Left cardiac atrium (tissue), 4 donors: ENCODE measurements at regions of chr2 and their contacts with region 1.

Region 1: DNA sequence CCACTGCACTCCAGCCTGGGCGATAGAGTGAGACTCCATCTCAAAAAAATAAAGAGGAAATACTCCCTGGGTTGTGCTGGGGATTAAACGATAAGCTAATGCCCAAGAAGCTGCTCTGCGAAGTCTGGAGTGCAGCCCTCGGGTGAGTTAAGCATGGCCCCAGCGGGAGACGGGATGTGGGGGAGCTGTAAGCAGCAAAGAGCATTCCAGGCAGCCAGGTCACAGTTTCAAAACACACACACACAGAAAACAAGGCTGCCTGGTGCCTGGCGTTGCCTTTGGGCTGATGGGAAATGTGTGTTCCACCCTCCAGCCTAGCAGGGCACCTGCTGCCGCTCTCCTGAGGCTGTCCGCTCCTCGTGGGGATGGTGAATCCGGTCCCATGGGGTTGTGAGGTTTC is 24.1 kb downstream of the ODC1 start:
- DNase-seq: no peak
- ATAC-seq: peak in 1 of 2 donors; percentile 74

Region 2: GRCh38 chr2:10133007-10133647 is 290.9 kb before region 1 on chr2:
- intact Hi-C with region 1: loop called in 1 of 2 experiments (anchors 5 kb)
- DNase-seq: no peak
- ATAC-seq: no peak

Region 3: GRCh38 chr2:10316336-10316735 is 107.7 kb before region 1 on chr2:
- intact Hi-C with region 1: no loop called
- DNase-seq: no peak
- ATAC-seq: no peak